ENCODE measurements at regions of chr20 and their contacts with region 1.

Region 1: DNA sequence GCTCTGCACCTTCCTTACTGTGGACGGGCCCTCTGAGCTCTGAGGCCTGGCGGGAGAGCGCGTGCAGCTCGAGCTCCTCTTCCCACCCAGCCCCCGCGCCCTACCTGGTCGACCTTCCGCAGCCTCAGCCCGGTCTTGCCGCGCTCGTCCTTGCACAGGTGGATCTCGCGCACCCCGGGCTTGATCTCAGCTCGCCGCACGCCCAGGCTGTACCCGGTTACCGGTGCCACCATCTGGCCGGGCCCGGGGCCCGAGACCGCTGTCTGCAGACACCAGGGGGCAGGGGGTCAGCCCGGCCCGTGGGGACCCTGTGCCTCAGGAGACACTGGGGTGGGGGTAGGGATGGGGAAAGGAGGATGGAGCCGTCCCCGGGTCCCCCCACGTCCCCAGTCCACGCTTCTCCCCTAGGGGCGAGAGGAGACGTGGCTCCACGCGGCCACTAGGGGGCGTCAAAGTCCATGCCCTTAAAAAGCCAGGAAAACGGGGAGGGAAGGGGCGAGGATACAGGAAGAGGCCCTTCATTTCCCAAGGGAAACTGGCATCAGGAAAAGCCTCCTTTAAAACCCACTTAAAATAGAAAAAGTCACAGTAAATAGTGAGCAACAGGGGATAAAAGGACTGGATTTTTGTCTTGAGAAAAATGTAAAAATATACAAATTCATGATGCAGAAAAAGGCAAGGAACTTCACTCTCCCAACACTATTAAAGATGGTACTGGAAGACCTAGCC is 15.5 kb downstream of the SDCBP2 start:
- DNase-seq: peak; percentile 54 to 58 (median 57)
- H3K4me3 ChIP-seq: peak overlapping the region in 1 of 7 experiments; percentile 40
- H3K27ac ChIP-seq: no peak overlapping the region
- H3K4me1 ChIP-seq: peaks cover 0 to 16% (median 4%) of the 10 kb centered on the region in 4 experiments
- H3K27me3 ChIP-seq: no peaks in the 10 kb centered on the region

Region 2: DNA sequence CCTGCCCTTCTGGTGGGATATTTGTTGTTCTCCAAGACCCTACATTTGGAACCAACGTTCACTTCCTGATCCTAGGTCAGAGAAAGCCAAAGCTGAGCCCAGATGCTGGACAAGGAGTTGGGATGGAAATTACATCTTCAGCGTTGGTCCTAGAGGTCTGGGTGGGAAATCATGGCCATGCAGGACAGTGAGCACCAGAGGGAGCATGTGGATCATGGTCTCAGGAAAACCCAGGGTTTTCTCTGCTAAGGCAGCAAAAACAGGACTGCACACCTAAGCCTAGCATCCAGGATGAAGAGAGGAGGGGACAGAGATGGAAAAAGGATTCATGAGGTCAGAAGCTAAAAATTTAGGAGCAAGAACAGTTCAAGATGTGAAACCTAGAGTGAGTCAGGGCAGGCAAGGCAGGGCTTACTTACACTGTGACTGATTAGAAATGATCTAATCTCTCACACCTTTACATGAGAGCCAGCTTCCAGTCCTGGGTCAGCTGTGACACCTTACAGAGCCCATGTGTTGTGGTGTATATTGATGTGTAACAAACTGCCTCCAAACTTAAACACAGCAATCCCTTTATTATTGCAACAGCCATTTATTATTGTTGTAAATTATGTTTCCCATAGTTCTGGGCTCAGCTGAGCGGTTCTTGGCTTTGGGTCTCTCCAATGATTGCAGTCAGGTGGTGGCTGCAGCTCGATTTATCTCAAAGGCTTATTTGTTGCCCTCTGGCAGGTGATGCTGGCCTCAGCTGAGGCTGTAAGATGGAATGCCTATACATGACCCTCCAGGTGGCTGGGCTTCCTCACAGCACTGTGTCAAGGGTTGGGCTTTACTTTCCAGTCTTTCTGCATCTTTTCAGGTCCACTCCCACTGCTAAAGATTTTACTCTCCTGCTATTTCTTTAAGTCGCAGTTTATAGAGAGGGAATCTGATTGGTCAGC is 103.7 kb before region 1 on chr20:
- CTCF ChIA-PET with region 1: no interaction called
- POLR2A ChIA-PET with region 1: no interaction called
- DNase-seq: no peak
- H3K4me3 ChIP-seq: no peak overlapping the region
- H3K27ac ChIP-seq: no peak overlapping the region
- H3K4me1 ChIP-seq: peaks cover 0 to 5% (median under 1%) of the 10 kb centered on the region in 4 experiments
- H3K27me3 ChIP-seq: peaks cover 0 to 4% (median 0%) of the 10 kb centered on the region in 5 experiments

Region 3: DNA sequence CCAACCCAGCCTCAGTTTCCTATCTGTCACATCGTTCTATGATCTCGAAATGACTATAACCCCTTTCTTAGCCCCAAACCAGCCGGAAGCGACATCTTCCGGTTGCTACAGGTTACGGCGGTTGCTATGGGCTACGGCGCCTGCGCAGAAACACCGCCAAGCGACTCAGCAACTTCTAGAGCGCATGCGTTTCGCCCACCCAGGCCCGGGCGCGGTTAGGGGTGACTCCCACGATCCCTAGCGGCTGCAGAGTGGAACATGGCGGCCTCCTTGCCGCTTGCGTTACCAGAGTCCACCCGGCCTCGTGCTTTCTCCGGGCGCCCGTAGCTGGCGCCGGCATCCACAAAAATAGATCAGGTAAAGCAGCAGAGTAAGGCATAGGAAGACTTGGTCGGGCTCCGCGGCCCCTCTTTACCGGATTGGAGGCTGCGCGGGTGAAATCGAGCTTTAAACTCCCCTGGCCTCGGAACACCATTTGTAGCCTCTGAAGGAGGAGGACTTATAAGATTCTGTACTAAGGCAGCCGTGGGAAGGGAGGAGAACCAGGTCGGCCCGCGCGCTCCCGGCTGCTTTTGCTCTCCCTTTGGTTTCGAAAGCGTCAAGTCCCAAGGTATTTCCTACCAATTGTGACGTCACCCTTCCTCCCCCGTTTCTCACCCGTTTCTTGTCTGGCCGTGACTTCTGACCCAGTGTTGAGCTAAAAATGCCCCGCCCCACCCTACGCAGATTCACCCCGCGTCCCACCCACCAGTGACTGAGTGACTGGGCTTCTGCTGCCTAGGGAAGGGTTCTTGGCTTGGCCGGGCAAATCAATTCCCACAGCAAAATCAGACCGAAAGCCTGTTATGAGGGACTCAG is 12.0 kb after region 1 on chr20:
- CTCF ChIA-PET with region 1: interaction called, 11 read pairs
- POLR2A ChIA-PET with region 1: no interaction called
- DNase-seq: peak; percentile 96 to 98 (median 97)
- H3K4me3 ChIP-seq: peak overlapping the region; percentile 66 to 95 (median 82)
- H3K27ac ChIP-seq: peak overlapping the region; percentile 99
- H3K4me1 ChIP-seq: peaks cover 10 to 62% (median 43%) of the 10 kb centered on the region in 4 experiments
- H3K27me3 ChIP-seq: no peaks in the 10 kb centered on the region

Region 4: DNA sequence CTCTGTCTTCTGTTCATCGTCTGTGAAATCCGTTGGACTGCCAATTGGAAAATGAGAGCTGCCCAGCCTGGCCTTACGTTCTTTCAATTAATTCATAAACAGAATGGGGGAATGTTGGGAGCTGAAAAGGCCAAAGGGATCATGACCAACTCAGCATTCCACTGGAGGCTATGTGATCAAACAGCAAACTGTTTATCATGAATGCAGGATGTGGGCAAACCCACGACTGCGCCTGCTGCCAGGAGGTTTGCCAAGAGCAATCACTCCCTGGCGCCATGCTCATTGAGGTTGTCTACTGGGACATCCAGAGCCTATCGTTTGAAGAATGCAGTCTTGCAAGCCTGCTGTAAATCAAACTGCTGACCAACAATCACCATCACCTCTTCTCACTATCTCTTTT is 88.7 kb after region 1 on chr20:
- CTCF ChIA-PET with region 1: interaction called, 10 read pairs
- POLR2A ChIA-PET with region 1: no interaction called
- DNase-seq: no peak
- H3K4me3 ChIP-seq: no peak overlapping the region
- H3K27ac ChIP-seq: no peak overlapping the region
- H3K4me1 ChIP-seq: peaks cover 0 to 8% (median 0%) of the 10 kb centered on the region in 4 experiments
- H3K27me3 ChIP-seq: no peaks in the 10 kb centered on the region